CD4-positive, alpha-beta memory T cell (primary cell): ENCODE measurements at regions of chr2 and their contacts with region 1.

Region 1: GRCh38 chr2:74334931-74335333 is 8.3 kb downstream of the SLC4A5 start:
- DNase-seq: peak; percentile 65 to 72 (median 69)
- H3K4me3 ChIP-seq: no peak overlapping the region
- H3K4me3 Mint-ChIP-seq: no peak overlapping the region
- H3K27ac ChIP-seq: no peak overlapping the region
- H3K27ac Mint-ChIP-seq: peak overlapping the region in 1 of 7 donors; percentile 37
- H3K4me1 ChIP-seq: peaks cover 15% of the 10 kb centered on the region
- H3K4me1 Mint-ChIP-seq: peaks cover 0 to 7% (median 7%) of the 10 kb centered on the region in 4 donors
- H3K27me3 ChIP-seq: no peaks in the 10 kb centered on the region
- H3K27me3 Mint-ChIP-seq: no peaks in the 10 kb centered on the region

Region 2: DNA sequence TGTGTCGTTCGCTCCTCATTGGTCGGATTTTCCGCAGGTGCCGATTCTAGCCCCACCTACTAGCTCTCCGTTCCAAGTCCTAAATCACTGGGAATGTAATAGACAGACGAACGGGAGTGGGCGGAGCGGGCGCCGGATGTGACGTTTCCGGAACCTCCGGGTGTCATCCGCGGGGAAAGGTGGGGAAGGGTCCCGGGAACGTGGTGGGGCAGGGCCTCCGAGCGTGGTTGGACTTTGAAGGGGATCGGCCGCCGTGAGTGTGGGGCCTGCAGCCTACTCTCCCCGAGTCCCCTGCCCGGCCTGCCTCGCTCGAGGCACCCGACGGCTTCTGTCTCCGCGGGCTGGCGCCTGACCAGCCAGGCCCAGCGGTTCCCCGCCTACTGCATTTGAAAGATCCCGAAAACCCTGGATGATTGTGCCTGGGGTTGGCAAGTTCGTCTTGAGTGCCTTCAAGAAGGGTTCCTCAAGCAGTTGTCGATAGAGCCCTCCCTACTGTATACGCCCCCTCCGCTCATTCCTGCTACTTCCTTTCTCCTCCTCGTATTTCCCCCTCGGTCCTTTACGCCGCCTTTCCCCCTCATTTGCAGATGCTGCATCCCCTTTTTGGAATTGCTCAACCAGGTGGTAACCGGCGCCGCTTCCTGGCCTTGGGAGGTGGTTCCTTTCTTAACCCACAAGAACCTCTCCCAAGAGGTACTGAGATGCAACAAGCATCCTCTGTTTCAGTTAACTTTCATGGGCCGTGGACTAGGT is 505.9 kb before region 1 on chr2 and contains the start of gene STAMBP:
- CTCF ChIA-PET with region 1: interaction called, 88 read pairs
- POLR2A ChIA-PET with region 1: no interaction called
- intact Hi-C with region 1: loop called (anchors 1 kb)
- DNase-seq: peak; percentile 87 to 95 (median 91)
- H3K4me3 ChIP-seq: peak within 1 kb of the TSS; percentile 64 to 81
- H3K4me3 Mint-ChIP-seq: peak within 1 kb of the TSS; percentile 91 to 99 (median 96)
- H3K27ac ChIP-seq: peak within 1 kb of the TSS; percentile 92
- H3K27ac Mint-ChIP-seq: peak within 1 kb of the TSS; percentile 94 to 100 (median 98)
- H3K4me1 ChIP-seq: peaks cover 45% of the 10 kb centered on the region
- H3K4me1 Mint-ChIP-seq: peaks cover 34 to 49% (median 40%) of the 10 kb centered on the region in 4 donors
- H3K27me3 ChIP-seq: no peaks in the 10 kb centered on the region
- H3K27me3 Mint-ChIP-seq: no peaks in the 10 kb centered on the region
- total RNA-seq, gene STAMBP: 34.8 to 37.3 TPM

Region 3: GRCh38 chr2:74092275-74092674 is 242.7 kb before region 1 on chr2:
- CTCF ChIA-PET with region 1: no interaction called
- POLR2A ChIA-PET with region 1: no interaction called
- intact Hi-C with region 1: no loop called
- DNase-seq: no peak
- H3K4me3 ChIP-seq: no peak overlapping the region
- H3K4me3 Mint-ChIP-seq: no peak overlapping the region
- H3K27ac ChIP-seq: no peak overlapping the region
- H3K27ac Mint-ChIP-seq: peak overlapping the region in 1 of 7 donors; percentile 37
- H3K4me1 ChIP-seq: no peaks in the 10 kb centered on the region
- H3K4me1 Mint-ChIP-seq: no peaks in the 10 kb centered on the region
- H3K27me3 ChIP-seq: no peaks in the 10 kb centered on the region
- H3K27me3 Mint-ChIP-seq: no peaks in the 10 kb centered on the region

Region 4: GRCh38 chr2:74261204-74261864 is 73.6 kb before region 1 on chr2:
- CTCF ChIA-PET with region 1: interaction called, 153 read pairs
- POLR2A ChIA-PET with region 1: interaction called, 4 read pairs
- intact Hi-C with region 1: no loop called
- DNase-seq: no peak
- H3K4me3 ChIP-seq: no peak overlapping the region
- H3K4me3 Mint-ChIP-seq: no peak overlapping the region
- H3K27ac ChIP-seq: no peak overlapping the region
- H3K27ac Mint-ChIP-seq: peak overlapping the region in 1 of 7 donors; percentile 53
- H3K4me1 ChIP-seq: peaks cover 1% of the 10 kb centered on the region
- H3K4me1 Mint-ChIP-seq: peaks cover 0 to 7% (median under 1%) of the 10 kb centered on the region in 4 donors
- H3K27me3 ChIP-seq: no peaks in the 10 kb centered on the region
- H3K27me3 Mint-ChIP-seq: no peaks in the 10 kb centered on the region

Region 5: DNA sequence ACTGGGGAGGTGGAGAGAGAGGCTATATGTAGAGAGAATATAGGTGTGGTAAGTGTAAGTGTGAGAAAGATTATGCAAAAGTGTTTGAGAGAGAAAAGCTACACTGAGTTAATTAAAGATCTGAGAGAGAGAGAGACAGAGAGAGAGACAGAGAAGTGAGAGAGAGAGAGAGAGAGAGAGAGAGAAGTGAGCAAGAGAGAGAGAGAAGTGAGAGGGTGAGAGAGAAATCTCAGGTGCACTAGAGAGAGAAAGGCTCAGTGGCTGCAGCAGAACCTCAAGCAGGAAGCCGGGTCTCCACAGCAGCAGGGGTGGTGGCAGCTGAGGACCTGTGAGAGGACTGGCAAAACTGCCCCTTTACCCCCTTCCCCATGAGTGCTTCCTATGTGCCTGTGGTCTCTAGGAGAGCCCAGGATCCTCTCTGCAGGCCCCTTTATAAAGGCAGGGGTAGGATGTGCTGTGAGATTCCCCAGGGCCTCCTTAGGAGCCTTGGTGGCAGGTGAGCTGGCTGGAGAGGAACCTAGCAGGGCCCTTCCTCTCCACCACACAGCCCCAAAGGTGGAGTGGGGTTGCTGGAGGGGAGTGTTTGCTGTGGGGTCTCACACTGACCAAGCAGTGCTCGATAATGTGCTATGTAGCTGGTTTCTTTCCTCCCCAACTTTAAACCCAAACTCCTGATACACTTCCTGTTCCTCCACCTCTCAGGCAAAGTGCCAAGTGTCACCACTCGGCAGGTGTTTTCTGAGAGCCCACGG is 44.3 kb before region 1 on chr2:
- CTCF ChIA-PET with region 1: interaction called, 26 read pairs
- POLR2A ChIA-PET with region 1: no interaction called
- intact Hi-C with region 1: no loop called
- DNase-seq: peak; percentile 64 to 74 (median 73)
- H3K4me3 ChIP-seq: peak overlapping the region in 1 of 2 donors; percentile 21
- H3K4me3 Mint-ChIP-seq: peak overlapping the region; percentile 71 to 88 (median 79)
- H3K27ac ChIP-seq: peak overlapping the region; percentile 57
- H3K27ac Mint-ChIP-seq: peak overlapping the region; percentile 89 to 99 (median 93)
- H3K4me1 ChIP-seq: peaks cover 26% of the 10 kb centered on the region
- H3K4me1 Mint-ChIP-seq: peaks cover 16 to 38% (median 28%) of the 10 kb centered on the region in 4 donors
- H3K27me3 ChIP-seq: no peaks in the 10 kb centered on the region
- H3K27me3 Mint-ChIP-seq: no peaks in the 10 kb centered on the region

Region 6: GRCh38 chr2:74357627-74358026 is 22.7 kb after region 1 on chr2:
- CTCF ChIA-PET with region 1: interaction called, 31 read pairs
- POLR2A ChIA-PET with region 1: no interaction called
- intact Hi-C with region 1: no loop called
- DNase-seq: no peak
- H3K4me3 ChIP-seq: no peak overlapping the region
- H3K4me3 Mint-ChIP-seq: no peak overlapping the region
- H3K27ac ChIP-seq: no peak overlapping the region
- H3K27ac Mint-ChIP-seq: peak overlapping the region in 2 of 7 donors; percentile 8 to 12
- H3K4me1 ChIP-seq: no peaks in the 10 kb centered on the region
- H3K4me1 Mint-ChIP-seq: no peaks in the 10 kb centered on the region
- H3K27me3 ChIP-seq: no peaks in the 10 kb centered on the region
- H3K27me3 Mint-ChIP-seq: no peaks in the 10 kb centered on the region

Region 7: GRCh38 chr2:74587664-74588277 is 252.8 kb after region 1 on chr2:
- CTCF ChIA-PET with region 1: interaction called, 8 read pairs
- POLR2A ChIA-PET with region 1: no interaction called
- intact Hi-C with region 1: loop called (anchors 2 kb)
- DNase-seq: peak; percentile 58 to 68 (median 67)
- H3K4me3 ChIP-seq: no peak overlapping the region
- H3K4me3 Mint-ChIP-seq: no peak overlapping the region
- H3K27ac ChIP-seq: no peak overlapping the region
- H3K27ac Mint-ChIP-seq: no peak overlapping the region
- H3K4me1 ChIP-seq: peaks cover 8% of the 10 kb centered on the region
- H3K4me1 Mint-ChIP-seq: peaks cover 7 to 10% (median 9%) of the 10 kb centered on the region in 4 donors
- H3K27me3 ChIP-seq: peaks cover 13% of the 10 kb centered on the region
- H3K27me3 Mint-ChIP-seq: peaks cover 1 to 8% of the 10 kb centered on the region in 2 donors

Region 8: GRCh38 chr2:75100011-75100800 is 765.3 kb after region 1 on chr2:
- CTCF ChIA-PET with region 1: no interaction called
- POLR2A ChIA-PET with region 1: no interaction called
- intact Hi-C with region 1: no loop called
- DNase-seq: no peak
- H3K4me3 ChIP-seq: no peak overlapping the region
- H3K4me3 Mint-ChIP-seq: no peak overlapping the region
- H3K27ac ChIP-seq: no peak overlapping the region
- H3K27ac Mint-ChIP-seq: no peak overlapping the region
- H3K4me1 ChIP-seq: no peaks in the 10 kb centered on the region
- H3K4me1 Mint-ChIP-seq: peaks cover 0 to 3% (median 1%) of the 10 kb centered on the region in 4 donors
- H3K27me3 ChIP-seq: no peaks in the 10 kb centered on the region
- H3K27me3 Mint-ChIP-seq: no peaks in the 10 kb centered on the region